Activated CD4-positive, alpha-beta memory T cell treated with anti-CD3 and anti-CD28 coated beads for 36 hours (primary cell): ENCODE measurements at regions of chr11 and their contacts with region 1.

Region 1: DNA sequence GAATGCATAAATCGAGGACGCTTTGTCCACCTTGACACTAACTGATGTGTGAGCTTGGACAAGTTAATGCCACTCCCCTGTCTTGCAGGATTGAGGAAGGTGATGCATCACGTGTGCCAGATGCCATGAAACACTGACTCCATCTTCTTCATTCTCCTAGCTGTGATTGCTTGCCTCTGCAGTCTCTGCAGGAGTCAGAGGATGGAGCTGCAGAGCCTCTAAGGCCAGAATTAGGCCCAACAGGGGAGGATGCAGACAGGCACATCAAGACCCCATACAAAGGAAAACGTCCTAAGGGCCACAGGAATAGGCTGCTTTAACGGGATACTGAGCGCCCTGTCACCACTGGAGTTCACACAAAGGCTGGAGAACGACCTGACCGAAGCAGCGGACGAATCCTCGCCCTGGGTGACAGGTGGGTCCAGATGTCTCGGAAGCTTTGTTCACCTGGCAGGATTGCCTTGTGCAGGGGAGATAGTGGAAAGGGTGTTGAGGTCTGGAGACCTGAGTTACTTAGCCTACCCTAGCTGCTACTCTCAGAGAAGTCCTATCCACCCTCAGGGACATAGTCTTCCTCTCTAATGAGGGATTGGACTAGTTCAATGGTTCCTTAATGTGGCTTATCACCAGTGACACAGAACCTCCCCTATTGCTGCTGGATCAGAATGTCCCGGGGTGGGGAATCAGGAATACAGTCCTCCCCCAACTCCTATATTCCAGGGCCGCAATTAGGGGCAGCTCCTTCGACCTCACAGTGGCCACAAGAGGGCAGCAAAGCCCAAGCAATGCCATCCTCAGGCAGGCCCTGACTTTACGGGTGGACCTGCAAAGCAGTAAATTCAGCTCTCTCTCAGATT is 32.4 kb downstream of the DBX1 start:
- DNase-seq: peak; percentile 84
- H3K4me3 Mint-ChIP-seq: no peak overlapping the region
- H3K27ac Mint-ChIP-seq: no peak overlapping the region
- H3K4me1 Mint-ChIP-seq: peaks cover 12% of the 10 kb centered on the region
- H3K27me3 Mint-ChIP-seq: peaks cover 12% of the 10 kb centered on the region

Region 2: GRCh38 chr11:19938169-19938856 is 189.6 kb before region 1 on chr11:
- CTCF ChIA-PET with region 1: interaction called, 10 read pairs
- POLR2A ChIA-PET with region 1: no interaction called
- intact Hi-C with region 1: loop called (anchors 5 kb)
- DNase-seq: peak; percentile 59
- H3K4me3 Mint-ChIP-seq: no peak overlapping the region
- H3K27ac Mint-ChIP-seq: no peak overlapping the region
- H3K4me1 Mint-ChIP-seq: no peaks in the 10 kb centered on the region
- H3K27me3 Mint-ChIP-seq: no peaks in the 10 kb centered on the region

Region 3: DNA sequence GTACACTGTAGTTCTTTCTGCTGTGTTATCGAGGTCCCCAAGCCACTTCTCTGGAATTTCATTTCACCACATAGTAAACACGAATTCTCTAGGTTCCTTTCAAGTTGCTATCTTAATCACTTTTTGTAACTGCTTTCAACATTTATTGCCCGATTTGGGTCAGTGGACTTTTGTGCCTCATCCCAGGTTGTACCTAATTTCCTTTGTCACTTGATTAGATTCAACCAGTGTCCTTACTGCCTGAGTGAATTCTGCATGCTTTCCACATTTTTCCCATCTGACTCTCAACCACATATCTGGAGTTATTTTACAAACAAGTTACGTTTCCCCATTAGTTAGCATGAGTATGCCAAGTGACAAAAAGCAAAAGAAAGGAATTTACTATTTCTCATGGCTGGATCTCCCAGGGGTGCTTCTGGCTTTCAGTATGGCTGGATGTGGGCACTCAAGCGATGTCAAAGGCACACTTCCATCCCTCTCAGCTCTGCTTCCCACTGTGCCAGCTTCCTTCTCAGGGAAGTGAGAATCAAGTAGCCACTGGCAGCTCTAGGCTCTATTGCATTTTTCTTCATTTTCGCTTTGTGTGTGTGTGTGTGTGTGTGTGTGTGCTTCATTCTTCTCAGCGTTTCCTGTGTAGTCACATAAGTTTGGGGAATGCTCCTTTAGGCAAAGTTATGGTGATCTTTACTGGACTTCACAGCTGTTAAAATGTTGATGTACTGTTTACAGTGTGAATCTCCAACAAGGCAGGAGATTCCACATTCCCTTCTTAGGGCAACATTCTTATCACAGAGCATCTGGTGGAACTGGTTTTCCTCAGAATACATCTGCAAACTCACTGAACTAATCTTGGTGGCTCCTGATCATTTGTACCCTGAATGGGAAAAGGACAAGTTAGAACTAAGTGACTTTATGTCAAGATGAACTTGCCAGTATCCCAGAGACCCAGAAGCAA is 96.5 kb before region 1 on chr11:
- CTCF ChIA-PET with region 1: no interaction called
- POLR2A ChIA-PET with region 1: no interaction called
- intact Hi-C with region 1: no loop called
- DNase-seq: no peak
- H3K4me3 Mint-ChIP-seq: no peak overlapping the region
- H3K27ac Mint-ChIP-seq: no peak overlapping the region
- H3K4me1 Mint-ChIP-seq: no peaks in the 10 kb centered on the region
- H3K27me3 Mint-ChIP-seq: peaks cover 18% of the 10 kb centered on the region

Region 4: DNA sequence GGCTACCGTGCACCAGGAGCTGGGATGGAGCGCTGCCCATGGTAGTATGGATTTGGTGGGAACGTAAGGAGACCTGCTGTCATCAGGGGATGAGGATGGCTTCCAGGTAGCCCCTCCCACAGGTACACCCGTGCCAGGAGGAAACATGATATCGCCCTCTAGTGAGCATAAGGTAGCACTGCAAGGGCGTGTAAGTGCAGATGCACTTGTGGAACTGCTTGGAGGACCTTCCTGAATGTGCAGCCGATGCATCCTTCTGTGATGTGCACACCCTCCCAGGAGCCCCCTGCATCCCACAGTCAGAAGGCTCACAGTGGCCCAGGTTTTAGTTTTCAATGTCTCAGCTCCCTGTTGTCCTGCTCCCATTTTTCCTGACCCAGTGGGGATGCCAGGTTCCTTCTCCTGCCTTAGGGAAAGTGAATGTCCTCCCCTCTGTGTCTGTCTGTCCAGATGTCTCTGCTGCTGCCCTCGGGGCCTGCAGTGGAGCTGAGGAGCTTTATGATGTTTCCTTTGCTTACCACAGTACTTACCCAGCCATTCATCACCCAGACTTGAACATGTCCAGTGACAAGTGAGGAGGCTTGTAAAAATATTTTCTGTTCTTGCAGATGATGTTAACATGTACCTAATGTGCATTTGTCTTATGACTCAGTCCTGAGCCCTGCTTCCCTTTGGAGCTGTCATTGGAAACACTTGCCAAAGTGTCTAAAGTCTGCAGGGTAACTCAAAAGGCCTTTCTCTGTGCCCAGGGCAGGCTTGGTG is 16.8 kb before region 1 on chr11:
- CTCF ChIA-PET with region 1: interaction called, 36 read pairs
- POLR2A ChIA-PET with region 1: no interaction called
- intact Hi-C with region 1: no loop called
- DNase-seq: peak; percentile 65
- H3K4me3 Mint-ChIP-seq: no peak overlapping the region
- H3K27ac Mint-ChIP-seq: no peak overlapping the region
- H3K4me1 Mint-ChIP-seq: no peaks in the 10 kb centered on the region
- H3K27me3 Mint-ChIP-seq: peaks cover 2% of the 10 kb centered on the region

Region 5: GRCh38 chr11:20337526-20338154 is 209.7 kb after region 1 on chr11:
- CTCF ChIA-PET with region 1: interaction called, 6 read pairs
- POLR2A ChIA-PET with region 1: no interaction called
- intact Hi-C with region 1: loop called (anchors 5 kb)
- DNase-seq: peak; percentile 13
- H3K4me3 Mint-ChIP-seq: no peak overlapping the region
- H3K27ac Mint-ChIP-seq: no peak overlapping the region
- H3K4me1 Mint-ChIP-seq: no peaks in the 10 kb centered on the region
- H3K27me3 Mint-ChIP-seq: peaks cover 53% of the 10 kb centered on the region

Region 6: DNA sequence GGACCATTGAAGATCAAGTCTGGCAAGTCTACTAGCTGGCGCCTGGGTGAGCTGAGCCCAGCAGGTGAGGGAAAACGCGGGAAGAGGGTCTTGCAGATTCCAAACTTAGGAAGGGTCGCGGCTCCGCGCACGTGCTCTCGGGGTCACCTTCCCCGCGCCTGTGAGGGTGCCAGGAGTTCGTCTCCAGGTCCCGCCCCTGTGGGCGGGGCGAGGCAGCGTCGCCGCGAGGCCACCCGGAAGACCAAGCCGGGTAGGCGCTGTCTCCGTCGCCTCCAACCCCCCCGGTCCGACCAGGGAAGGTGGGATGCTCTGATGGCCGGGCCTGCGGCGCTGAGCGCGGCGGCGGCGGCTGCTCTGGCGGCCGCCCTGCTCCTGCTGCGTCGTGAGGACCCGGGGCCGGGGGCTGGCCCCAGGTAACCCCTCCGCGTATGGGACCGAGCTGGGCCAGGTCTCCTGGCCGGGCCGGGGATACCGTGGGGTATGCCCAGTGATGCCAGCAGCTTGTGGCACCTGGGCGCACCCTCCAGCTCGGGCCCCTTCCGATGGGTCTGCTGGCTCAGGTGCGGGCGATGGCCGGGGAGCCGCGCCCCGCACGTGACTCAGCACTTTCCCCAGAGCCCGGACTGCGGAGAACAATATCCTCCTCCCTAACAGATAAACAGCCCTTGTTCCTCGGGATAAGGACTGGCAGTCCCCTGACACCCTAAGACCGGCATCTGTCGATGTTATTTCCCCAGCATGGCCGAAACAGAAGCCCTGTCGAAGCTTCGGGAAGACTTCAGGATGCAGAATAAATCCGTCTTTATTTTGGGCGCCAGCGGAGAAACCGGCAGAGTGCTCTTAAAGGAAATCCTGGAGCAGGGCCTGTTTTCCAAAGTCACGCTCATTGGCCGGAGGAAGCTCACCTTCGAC is 235.9 kb after region 1 on chr11 and contains the start of gene HTATIP2:
- CTCF ChIA-PET with region 1: interaction called, 173 read pairs
- POLR2A ChIA-PET with region 1: no interaction called
- intact Hi-C with region 1: no loop called
- DNase-seq: peak; percentile 82
- H3K4me3 Mint-ChIP-seq: peak within 1 kb of the TSS; percentile 80
- H3K27ac Mint-ChIP-seq: peak within 1 kb of the TSS; percentile 84
- H3K4me1 Mint-ChIP-seq: peaks cover 59% of the 10 kb centered on the region
- H3K27me3 Mint-ChIP-seq: no peaks in the 10 kb centered on the region
- total RNA-seq, gene HTATIP2: 82.1 to 83.4 TPM